H1 (cell line): ENCODE measurements at regions of chr15 and their contacts with region 1.

Region 1: DNA sequence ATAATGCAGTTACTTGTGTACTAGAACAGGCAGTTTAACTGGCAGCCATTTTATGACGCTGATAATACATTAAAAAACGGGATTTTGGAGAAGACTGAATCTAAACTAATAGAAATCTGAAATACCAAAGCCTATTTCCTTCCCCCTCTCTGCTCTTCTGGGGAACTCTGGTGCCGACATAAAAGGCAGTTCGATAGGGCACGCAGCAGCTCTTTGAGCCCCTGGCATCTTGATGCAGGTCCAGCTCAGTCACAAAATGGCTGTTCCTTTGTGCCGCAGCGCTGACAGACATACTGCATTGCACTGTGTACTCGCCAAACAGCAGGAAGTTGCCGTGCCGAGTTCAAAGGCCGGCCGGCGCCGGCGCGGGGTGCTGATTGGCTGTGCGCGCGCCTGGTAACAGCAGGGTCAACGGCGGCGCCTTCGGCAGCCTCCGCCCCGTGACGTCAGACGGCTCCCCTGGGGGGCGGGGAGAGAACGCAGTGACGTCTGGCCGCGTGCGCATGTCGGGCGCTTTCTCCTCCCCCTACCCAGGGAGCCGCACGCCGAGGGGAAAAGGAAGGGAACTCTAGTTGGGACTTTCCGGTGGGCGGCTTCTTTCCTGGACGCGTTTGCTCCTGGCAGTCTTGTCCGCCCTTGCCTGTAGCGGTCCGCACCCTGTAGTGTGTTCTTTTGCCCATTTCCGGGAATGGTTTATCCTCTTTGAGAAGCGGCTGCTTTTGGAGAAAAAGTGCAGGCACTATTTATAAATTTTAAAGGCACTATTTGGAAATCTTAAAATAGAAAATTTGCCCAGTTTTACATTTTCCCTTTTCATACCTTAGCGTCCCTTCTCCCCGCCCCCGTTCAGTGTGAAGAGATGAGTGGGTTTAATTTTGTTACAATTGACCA is 4.1 kb downstream of the CHD2 start:
- DNase-seq: peak; percentile 98 to 99
- H3K4me3 ChIP-seq: peak overlapping the region; percentile 50 to 97 (median 88)
- H3K27ac ChIP-seq: peak overlapping the region; percentile 98
- H3K4me1 ChIP-seq: peaks cover 0 to 16% (median 4%) of the 10 kb centered on the region in 4 experiments; a peak in 5 of 7 replicates
- H3K27me3 ChIP-seq: no peaks in the 10 kb centered on the region
- CTCF ChIP-seq: no peak
- EP300 ChIP-seq: peak; percentile 10 to 38; a peak in 2 of 3 replicates
- POLR2A ChIP-seq: peak; percentile 98 to 99
- RAD21 ChIP-seq: no peak

Region 2: DNA sequence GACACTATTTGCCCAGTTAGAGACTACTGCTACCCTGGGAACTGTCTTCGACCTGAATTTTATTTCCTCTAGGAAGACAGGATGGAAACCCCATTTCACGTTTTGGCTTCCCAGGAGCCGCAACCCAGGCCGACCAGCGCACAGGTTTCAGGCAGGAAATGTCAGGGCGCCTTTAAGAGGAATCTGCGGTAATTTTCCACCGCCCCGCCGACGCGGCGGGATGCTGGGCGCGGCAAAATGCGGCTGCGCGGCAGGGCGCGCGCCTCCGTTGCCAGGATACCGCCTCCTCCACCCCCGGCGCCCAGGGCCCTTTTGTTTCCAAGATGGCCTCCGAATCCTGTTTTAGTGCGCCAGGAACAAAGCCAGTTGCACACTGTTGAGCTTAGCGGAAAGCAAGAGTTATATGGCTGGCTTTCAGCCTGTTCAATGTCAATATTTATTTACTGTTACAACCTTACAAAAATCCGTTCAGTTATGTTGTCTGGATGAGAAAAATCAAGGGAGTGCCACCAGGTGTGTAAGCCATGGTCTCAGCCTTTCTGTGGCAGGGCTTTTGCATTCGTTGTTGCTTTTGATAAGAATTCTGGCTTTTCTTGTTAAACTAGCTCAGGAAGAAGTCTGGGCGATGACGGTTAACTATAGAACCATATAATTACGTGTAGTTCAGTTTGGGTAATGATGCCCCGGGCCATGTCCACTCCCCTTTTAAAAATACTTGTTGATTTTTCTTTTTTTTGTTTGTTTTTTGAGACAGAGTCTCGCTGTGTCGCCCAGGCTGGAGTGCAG is 83.8 kb before region 1 on chr15:
- CTCF ChIA-PET with region 1: interaction called, 3 read pairs
- POLR2A ChIA-PET with region 1: interaction called, 26 read pairs
- DNase-seq: peak; percentile 70 to 94
- H3K4me3 ChIP-seq: peak overlapping the region; percentile 13 to 49 (median 34); a peak in 5 of 8 replicates
- H3K27ac ChIP-seq: peak overlapping the region; percentile 84
- H3K4me1 ChIP-seq: peaks cover 15 to 44% (median 39%) of the 10 kb centered on the region in 4 experiments; a peak in 6 of 7 replicates
- H3K27me3 ChIP-seq: peaks cover 0 to 2% (median 0%) of the 10 kb centered on the region in 4 experiments; a peak in 1 of 7 replicates
- CTCF ChIP-seq: no peak
- EP300 ChIP-seq: peak in 1 of 2 experiments; percentile 87; a peak in 2 of 3 replicates
- POLR2A ChIP-seq: peak in 1 of 2 experiments; percentile 77; a peak in 2 of 3 replicates
- RAD21 ChIP-seq: no peak

Region 3: DNA sequence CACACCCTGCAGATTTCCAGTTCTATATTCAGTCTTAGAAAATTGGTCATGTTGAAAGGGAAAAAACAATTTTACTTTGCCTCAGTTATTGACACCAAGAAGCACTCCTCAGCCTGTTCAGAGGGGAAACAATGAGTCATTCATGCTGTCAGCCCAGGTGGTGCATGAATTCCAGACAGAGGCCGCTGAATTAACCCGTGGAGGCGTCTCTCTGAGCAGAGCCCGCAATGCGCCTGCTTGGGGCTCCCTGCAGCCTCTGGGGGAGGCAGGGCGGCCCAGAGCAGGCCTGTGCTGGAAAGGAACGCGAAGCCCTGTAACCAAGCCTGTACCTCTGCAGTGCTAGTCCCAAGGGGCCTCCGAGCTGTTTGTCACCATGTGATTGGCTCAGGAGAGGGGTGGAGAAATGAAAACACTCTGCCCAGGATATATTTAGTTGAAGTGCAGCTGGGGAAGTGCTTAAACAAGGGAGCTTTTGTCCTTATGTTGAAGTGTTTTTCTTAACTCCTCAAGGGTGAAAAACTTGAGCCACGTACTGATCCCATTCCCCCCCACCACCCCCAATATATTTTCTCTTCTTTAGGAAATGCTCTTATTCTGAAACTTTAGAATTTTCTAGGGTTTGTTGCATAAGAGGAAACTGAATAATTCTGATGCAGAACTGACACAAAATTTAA is 72.4 kb before region 1 on chr15:
- CTCF ChIA-PET with region 1: no interaction called
- POLR2A ChIA-PET with region 1: interaction called, 20 read pairs
- DNase-seq: peak; percentile 80 to 90
- H3K4me3 ChIP-seq: peak overlapping the region in 1 of 4 experiments; percentile 41; a peak in 1 of 8 replicates
- H3K27ac ChIP-seq: peak overlapping the region; percentile 73
- H3K4me1 ChIP-seq: peaks cover 3 to 15% (median 11%) of the 10 kb centered on the region in 4 experiments; a peak in 6 of 7 replicates
- H3K27me3 ChIP-seq: no peaks in the 10 kb centered on the region
- CTCF ChIP-seq: no peak
- EP300 ChIP-seq: peak in 1 of 2 experiments; percentile 62; a peak in 1 of 3 replicates
- POLR2A ChIP-seq: peak; percentile 67 to 90
- RAD21 ChIP-seq: peak; percentile 36 to 42

Region 4: GRCh38 chr15:92917606-92918407 is 13.6 kb after region 1 on chr15:
- CTCF ChIA-PET with region 1: interaction called, 31 read pairs
- POLR2A ChIA-PET with region 1: interaction called, 105 read pairs
- DNase-seq: peak; percentile 80 to 96
- H3K4me3 ChIP-seq: no peak overlapping the region
- H3K27ac ChIP-seq: peak overlapping the region; percentile 67
- H3K4me1 ChIP-seq: peaks cover 0 to 14% (median 8%) of the 10 kb centered on the region in 4 experiments; a peak in 5 of 7 replicates
- H3K27me3 ChIP-seq: no peaks in the 10 kb centered on the region
- CTCF ChIP-seq: peak; percentile 44 to 82 (median 81)
- EP300 ChIP-seq: peak in 1 of 2 experiments; percentile 54; a peak in 1 of 3 replicates
- POLR2A ChIP-seq: no peak
- RAD21 ChIP-seq: peak; percentile 81 to 87